Colonic mucosa (tissue), 4 donors: ENCODE measurements at regions of chr9 and their contacts with region 1.

Region 1: GRCh38 chr9:34899535-34900158 is 58.4 kb upstream of the PHF24 start:
- DNase-seq: peak; percentile 78
- H3K4me3 ChIP-seq: no peak overlapping the region
- H3K27ac ChIP-seq: no peak overlapping the region
- H3K4me1 ChIP-seq: no peaks in the 10 kb centered on the region
- H3K27me3 ChIP-seq: no peaks in the 10 kb centered on the region
- CTCF ChIP-seq: peak; percentile 66

Region 2: GRCh38 chr9:34985311-34985899 is 85.8 kb after region 1 on chr9:
- intact Hi-C with region 1: loop called (anchors 2 kb)
- DNase-seq: peak; percentile 70
- H3K4me3 ChIP-seq: no peak overlapping the region
- H3K27ac ChIP-seq: no peak overlapping the region
- H3K4me1 ChIP-seq: no peaks in the 10 kb centered on the region
- H3K27me3 ChIP-seq: no peaks in the 10 kb centered on the region
- CTCF ChIP-seq: peak; percentile 77

Region 3: DNA sequence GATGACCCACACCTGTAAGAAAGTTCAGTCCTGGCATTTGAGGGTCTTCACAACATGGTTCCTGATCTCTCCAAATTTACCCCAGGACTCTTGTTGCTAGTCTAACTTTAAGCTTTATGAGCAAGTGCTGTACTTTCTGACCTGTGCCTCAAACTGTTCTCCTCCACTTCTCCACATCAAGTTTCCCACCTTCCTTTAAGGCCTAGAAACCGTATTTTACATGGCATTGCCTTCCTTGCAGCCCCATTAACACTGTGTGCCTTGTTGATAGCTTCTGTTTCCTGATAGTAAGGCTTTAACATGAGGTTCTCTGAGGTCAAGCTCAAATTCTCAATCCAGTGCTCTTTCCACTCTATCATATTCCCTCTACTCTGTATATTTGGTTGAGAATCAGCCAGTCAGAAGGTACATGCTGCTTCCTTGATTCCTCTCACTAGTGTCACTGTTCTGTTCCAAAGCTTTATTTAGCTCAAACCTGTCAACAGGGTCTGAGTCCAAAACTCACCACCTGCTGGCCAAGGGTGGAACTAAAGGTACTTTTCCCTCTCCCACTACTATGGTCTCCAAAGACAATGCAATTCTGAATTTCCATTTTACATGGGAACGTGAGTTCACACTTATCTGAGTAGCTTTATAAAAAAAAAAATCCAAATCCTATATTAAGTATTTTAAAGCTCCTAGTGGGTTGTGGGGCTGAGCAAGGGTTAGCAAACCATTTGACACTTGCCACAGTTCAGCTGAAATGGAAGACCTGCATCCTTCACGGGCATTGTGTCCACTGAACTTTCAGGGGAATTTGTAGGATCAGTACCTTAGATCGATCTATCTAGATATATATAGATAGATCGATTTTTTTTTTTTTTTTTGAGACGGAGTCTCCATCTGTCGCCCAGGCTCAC is 151.7 kb after region 1 on chr9:
- intact Hi-C with region 1: loop called (anchors 10 kb)
- DNase-seq: peak; percentile 31
- H3K4me3 ChIP-seq: no peak overlapping the region
- H3K27ac ChIP-seq: no peak overlapping the region
- H3K4me1 ChIP-seq: no peaks in the 10 kb centered on the region
- H3K27me3 ChIP-seq: no peaks in the 10 kb centered on the region
- CTCF ChIP-seq: peak; percentile 43

Region 4: DNA sequence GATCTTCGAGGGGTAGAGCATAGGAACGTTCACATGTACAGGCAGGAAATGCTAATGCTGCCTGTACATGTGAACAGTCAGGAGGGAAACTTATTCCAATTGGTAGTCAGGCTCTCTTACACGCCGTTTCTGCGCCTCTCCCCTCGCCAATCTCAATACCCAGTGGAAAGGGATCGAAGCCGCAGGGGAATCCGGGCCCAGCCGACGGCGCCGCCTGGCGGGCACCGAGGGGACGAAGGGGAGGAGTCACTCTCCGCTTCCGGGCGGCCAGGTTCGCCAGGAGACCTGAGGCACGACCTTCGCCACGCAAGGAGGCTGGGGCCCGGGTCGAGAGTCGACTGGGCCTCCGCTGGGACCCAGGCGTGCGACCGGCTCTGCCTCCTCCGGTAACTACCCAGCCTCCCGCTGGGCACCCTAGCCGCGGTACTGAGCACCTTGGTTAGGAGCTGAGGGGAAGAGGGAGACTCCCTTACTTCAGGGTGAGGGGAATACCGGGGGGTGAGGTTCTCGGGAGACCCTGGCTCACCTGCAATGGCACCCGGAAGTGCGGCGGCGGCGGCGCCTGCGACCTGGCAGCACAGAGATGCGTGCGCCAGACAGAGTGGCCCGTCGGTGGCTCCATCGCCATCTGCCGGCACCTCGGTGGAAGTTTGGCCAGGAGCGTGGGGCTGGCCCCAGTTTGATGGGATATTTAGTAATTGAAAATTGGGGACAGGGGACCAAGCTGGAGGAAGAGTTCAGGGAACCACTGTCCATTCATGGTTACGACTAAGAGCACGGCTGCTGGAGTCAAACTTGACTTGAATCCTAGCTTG is 196.6 kb after region 1 on chr9 and contains the start of gene PIGO:
- intact Hi-C with region 1: loop called (anchors 10 kb)
- DNase-seq: peak; percentile 90
- H3K4me3 ChIP-seq: peak within 1 kb of the TSS; percentile 72
- H3K27ac ChIP-seq: peak within 1 kb of the TSS; percentile 96
- H3K4me1 ChIP-seq: no peaks in the 10 kb centered on the region
- H3K27me3 ChIP-seq: no peaks in the 10 kb centered on the region
- CTCF ChIP-seq: peak; percentile 71
- total RNA-seq, gene PIGO: 27.6 to 51.3 TPM

Region 5: DNA sequence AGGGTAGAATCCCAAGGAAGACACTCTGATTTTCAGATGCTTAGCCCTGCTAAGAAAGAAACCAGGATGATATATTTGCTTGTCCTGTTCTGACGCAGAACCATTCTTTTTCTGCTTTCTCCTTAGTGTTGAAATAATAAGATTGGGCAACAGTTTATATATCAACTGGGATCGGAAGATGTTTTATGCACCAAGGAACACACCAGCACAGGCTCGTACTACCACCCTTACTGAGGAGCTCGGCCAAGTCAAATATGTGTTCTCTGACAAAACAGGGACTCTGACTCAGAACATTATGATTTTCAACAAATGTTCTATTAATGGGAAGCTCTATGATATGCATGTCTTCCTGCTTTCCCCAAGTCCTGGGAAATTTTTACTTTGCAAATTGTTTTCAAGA is 571.2 kb after region 1 on chr9:
- intact Hi-C with region 1: loop called (anchors 10 kb)
- DNase-seq: no peak
- H3K4me3 ChIP-seq: no peak overlapping the region
- H3K27ac ChIP-seq: no peak overlapping the region
- H3K4me1 ChIP-seq: no peaks in the 10 kb centered on the region
- H3K27me3 ChIP-seq: no peaks in the 10 kb centered on the region
- CTCF ChIP-seq: no peak